ENCODE measurements at regions of chr12 and their contacts with region 1.

Region 1: DNA sequence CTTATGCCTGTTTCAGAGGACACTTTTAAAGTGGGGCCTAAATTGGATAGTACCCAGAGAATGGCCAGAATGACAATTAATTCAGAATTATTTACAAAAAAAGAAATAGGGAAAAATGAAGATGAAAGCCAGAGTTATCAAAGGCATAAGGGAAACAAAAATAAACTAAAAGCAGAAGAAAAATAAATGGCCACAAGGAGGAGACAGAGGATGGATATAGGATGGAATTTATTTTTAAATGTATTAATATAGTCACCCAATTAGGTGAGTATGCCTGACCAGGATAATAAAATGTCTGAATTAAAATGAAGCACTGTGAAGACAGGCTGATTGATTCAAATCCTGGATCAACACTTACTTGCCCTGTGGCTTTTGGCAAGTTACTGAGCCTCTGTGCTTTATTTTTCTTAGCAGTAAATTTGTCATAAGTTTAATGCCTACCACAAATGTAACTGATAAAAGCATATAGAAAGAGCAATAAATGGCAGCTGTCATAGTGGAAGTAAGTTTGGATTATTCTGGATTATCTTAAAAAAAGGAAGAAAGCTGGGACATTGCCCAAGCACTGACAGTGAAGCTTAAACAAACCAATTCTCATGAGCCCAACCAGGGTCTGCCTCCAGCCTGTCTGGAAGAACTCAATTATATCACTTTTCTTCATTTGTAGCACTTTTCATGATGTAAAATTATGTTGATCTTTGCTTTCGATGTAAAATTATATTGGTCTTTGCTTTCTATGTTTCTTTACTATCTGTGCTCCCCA is 3.5 kb downstream of the CLEC9A start:
- DNase-seq: peak; percentile 16
- H3K4me3 ChIP-seq: no peak overlapping the region
- H3K27ac ChIP-seq: no peak overlapping the region
- H3K4me1 ChIP-seq: peaks cover 21% of the 10 kb centered on the region
- H3K27me3 ChIP-seq: no peaks in the 10 kb centered on the region
- CTCF ChIP-seq: peak; percentile 35 to 56

Region 2: GRCh38 chr12:9999016-9999415 is 34.9 kb before region 1 on chr12 and contains the start of gene CLEC1B:
- CTCF ChIA-PET with region 1: no interaction called
- dilution Hi-C with region 1: no loop called
- in situ Hi-C with region 1: no loop called
- intact Hi-C with region 1: loop called (anchors 2 kb)
- DNase-seq: no peak
- H3K4me3 ChIP-seq: no peak within 1 kb of the TSS
- H3K27ac ChIP-seq: no peak within 1 kb of the TSS
- H3K4me1 ChIP-seq: no peaks in the 10 kb centered on the region
- H3K27me3 ChIP-seq: peaks cover 17% of the 10 kb centered on the region
- CTCF ChIP-seq: no peak
- total RNA-seq, gene CLEC1B: not detected

Region 3: DNA sequence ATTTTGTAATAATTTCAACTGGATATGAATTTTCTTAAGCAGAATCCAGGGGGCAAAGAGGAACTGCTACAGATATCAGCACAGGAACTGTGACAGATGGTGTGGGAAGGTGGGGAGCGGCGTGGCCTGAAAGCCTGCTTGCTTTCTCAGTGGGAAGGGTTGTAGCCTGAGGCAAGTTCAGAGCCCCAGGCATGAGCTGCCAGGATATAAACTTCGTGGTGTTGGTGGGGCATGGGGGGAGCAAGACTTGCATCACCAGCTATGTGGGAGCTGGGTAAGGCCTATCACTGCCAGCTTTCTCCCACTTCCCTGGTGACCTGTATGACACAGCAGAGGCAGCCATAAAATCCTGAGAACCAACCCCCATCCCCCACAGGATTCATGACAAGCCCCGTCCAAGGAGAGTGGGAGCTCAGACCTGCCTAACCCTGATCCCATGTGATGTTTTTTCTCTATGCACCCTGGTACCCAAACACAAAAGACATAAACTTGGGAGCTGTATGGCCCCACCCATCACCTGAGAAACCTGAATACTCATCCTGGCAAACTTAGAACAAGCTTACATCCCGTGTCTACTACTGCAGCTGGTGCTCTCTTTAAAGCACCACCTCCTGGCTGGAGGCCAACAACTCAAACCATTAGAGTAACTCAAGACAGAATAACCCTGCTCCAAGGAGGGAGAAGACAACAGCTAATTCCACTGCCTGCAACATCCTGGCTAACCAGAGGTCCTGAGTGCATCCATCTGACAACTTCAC is 48.3 kb after region 1 on chr12:
- CTCF ChIA-PET with region 1: no interaction called
- dilution Hi-C with region 1: loop called (anchors 5 kb)
- in situ Hi-C with region 1: no loop called
- intact Hi-C with region 1: no loop called
- DNase-seq: peak; percentile 6
- H3K4me3 ChIP-seq: no peak overlapping the region
- H3K27ac ChIP-seq: no peak overlapping the region
- H3K4me1 ChIP-seq: no peaks in the 10 kb centered on the region
- H3K27me3 ChIP-seq: no peaks in the 10 kb centered on the region
- CTCF ChIP-seq: no peak

Region 4: GRCh38 chr12:10190558-10191388 is 156.8 kb after region 1 on chr12:
- CTCF ChIA-PET with region 1: no interaction called
- dilution Hi-C with region 1: no loop called
- in situ Hi-C with region 1: no loop called
- intact Hi-C with region 1: loop called (anchors 5 kb)
- DNase-seq: peak; percentile 60
- H3K4me3 ChIP-seq: no peak overlapping the region
- H3K27ac ChIP-seq: no peak overlapping the region
- H3K4me1 ChIP-seq: peaks cover 18% of the 10 kb centered on the region
- H3K27me3 ChIP-seq: no peaks in the 10 kb centered on the region
- CTCF ChIP-seq: peak; percentile 85 to 97

Region 5: GRCh38 chr12:10339053-10339840 is 305.3 kb after region 1 on chr12:
- CTCF ChIA-PET with region 1: no interaction called
- dilution Hi-C with region 1: no loop called
- in situ Hi-C with region 1: no loop called
- intact Hi-C with region 1: no loop called
- DNase-seq: peak; percentile 20
- H3K4me3 ChIP-seq: no peak overlapping the region
- H3K27ac ChIP-seq: no peak overlapping the region
- H3K4me1 ChIP-seq: peaks cover 7% of the 10 kb centered on the region
- H3K27me3 ChIP-seq: no peaks in the 10 kb centered on the region
- CTCF ChIP-seq: no peak

Region 6: DNA sequence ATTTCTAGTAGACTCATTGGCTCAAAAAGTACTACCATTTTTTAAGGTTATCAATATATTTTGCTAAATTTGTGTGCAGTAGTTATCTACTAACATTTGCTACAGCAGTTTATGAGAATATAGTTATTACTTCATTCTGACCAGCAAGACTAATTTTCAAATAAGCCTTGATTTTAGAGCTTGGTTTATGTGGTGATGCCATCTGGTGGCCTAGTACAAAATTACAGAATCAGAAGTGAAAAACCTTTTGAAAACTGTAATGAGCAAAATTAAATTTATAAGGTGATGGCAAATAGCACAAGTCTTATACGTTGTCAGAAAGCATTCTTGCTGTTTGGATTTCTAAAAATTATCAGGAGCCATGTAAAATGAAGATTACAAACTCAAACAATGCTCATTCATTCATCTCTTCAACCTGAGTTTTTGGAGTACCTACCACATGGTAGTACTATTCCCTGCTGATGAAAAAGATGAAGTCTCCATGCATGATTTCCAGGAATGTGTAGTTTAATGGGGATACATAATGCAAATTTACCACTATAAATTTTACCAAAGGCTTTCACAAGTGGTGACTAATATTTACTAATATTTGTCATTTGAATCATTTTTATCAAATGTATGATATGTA is 528.5 kb after region 1 on chr12:
- CTCF ChIA-PET with region 1: no interaction called
- dilution Hi-C with region 1: no loop called
- in situ Hi-C with region 1: loop called in 1 of 2 experiments (anchors 25 kb)
- intact Hi-C with region 1: loop called (anchors 10 kb)
- DNase-seq: peak; percentile 20
- H3K4me3 ChIP-seq: no peak overlapping the region
- H3K27ac ChIP-seq: no peak overlapping the region
- H3K4me1 ChIP-seq: no peaks in the 10 kb centered on the region
- H3K27me3 ChIP-seq: no peaks in the 10 kb centered on the region
- CTCF ChIP-seq: peak; percentile 64